SK-N-SH (cell line): ENCODE measurements at regions of chr12 and their contacts with region 1.

Region 1: DNA sequence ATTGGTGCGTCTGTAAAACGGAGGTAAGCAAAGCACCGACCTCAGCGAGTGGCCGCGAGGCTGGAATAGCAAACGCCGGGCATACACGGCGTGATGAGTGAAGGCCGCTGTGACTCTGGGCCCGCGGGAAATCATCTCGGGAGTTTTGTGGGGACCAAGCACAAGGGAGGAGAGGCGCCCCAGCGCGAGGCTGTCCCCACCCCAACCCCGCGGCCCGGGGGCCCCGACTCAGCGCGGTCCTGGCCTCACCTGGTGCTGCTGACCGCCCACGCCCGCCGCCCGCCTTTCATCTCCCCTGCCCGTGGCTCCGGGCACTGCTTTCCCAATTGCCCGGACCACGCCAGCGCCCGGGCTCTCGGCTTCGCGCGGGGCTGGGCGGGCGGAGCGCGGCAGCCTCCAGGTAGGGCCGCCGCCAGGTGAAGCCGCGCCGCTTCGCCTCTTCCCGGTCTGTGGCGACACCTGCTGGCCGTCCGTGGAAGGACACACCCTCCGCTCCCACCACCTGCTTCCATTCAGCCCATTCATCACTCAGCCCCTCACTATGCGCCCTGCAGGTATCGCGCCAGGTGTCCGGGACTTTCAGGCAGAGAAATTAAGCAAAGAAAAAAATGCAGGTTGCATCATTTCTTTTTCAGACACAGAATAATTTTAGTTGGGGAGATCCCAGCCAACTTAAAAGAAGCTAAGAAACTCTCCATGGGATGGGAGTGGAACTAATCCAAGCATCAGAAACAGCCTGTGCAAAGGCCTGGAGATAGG is 360.4 kb downstream of the MED13L start:
- DNase-seq: peak; percentile 86
- H3K4me3 ChIP-seq: peak overlapping the region; percentile 20 to 31; a peak in 2 of 4 replicates
- H3K27ac ChIP-seq: no peak overlapping the region
- H3K4me1 ChIP-seq: peaks cover 0 to 3% of the 10 kb centered on the region in 2 experiments; a peak in 1 of 4 replicates
- H3K27me3 ChIP-seq: no peaks in the 10 kb centered on the region; the same call in 1 of the 2 replicates
- CTCF ChIP-seq: peak; percentile 84
- EP300 ChIP-seq: no peak
- RAD21 ChIP-seq: peak; percentile 87

Region 2: DNA sequence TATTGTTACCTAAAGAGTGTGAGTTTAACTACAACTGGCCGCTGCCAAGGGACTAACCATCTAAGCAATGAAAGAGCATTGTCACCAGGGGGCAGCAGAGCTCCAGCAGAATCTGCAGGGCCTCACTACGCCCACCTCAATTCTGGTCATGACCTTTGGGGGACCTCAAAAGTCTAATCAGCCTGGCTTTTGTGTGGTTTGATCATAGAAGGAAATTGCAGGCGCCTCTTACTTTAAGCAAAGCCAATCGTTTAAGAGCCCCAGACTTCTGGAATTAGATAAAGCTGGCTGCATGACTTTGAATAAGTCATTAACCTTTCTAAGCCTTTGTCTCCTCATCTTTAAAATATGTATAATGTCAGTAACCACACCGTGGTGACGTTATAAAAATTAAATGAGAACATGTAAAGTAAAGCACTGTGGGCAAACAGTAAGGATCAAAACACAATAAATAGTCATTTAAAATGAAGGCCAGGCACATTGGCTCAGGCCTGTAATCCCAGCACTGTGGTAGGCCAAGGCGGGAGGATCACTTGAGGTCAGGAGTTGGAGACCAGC is 1291.7 kb before region 1 on chr12:
- CTCF ChIA-PET with region 1: interaction called, 56 read pairs
- POLR2A ChIA-PET with region 1: no interaction called
- DNase-seq: peak; percentile 68
- H3K4me3 ChIP-seq: no peak overlapping the region; a peak in 1 of 4 replicates
- H3K27ac ChIP-seq: no peak overlapping the region
- H3K4me1 ChIP-seq: no peaks in the 10 kb centered on the region
- H3K27me3 ChIP-seq: no peaks in the 10 kb centered on the region
- CTCF ChIP-seq: peak; percentile 86
- EP300 ChIP-seq: no peak
- RAD21 ChIP-seq: peak; percentile 86

Region 3: DNA sequence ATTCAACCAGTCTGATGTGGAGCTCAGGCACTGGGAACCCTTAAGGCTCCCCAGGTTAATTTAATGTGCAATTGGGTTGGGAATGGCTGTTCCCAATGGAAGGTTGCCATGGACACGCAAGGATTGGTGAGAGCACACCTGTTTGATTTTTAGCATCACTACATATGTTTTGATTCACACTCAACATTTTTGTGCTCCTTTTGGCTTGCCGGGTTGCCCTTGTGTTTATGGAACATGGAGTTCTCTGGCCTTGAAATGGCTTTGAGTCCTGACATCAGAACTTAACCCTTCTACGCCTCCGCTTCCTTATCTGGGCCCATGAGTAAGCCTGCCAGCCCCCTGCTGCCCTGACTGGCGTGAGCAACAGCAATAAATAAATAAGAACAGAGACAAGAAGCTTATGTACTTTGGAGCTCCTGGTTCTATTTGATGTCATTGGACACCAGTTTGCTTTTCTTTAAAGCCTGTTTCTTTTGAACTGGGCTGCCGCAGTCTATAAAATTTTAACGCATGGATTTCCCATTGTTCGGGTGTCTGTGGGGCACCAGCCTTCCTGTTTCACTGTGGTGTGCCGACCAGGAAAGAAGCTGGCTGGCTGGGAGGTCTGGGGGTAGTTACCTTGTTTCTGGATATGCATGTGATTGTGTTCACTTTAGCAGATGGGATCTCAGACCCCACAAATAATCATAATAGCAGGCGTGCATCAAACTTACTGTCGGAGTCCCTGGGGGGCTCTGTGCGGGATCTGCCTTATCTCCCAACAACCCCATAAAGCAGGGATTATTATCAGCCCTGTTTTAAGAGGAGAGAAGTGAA is 1260.9 kb before region 1 on chr12:
- CTCF ChIA-PET with region 1: interaction called, 27 read pairs
- POLR2A ChIA-PET with region 1: no interaction called
- DNase-seq: no peak
- H3K4me3 ChIP-seq: no peak overlapping the region
- H3K27ac ChIP-seq: no peak overlapping the region
- H3K4me1 ChIP-seq: no peaks in the 10 kb centered on the region
- H3K27me3 ChIP-seq: no peaks in the 10 kb centered on the region
- CTCF ChIP-seq: no peak
- EP300 ChIP-seq: no peak
- RAD21 ChIP-seq: no peak

Region 4: GRCh38 chr12:114668151-114668885 is 1248.8 kb before region 1 on chr12:
- CTCF ChIA-PET with region 1: interaction called, 45 read pairs
- POLR2A ChIA-PET with region 1: no interaction called
- DNase-seq: peak; percentile 92
- H3K4me3 ChIP-seq: peak overlapping the region; percentile 59 to 77
- H3K27ac ChIP-seq: peak overlapping the region in 1 of 2 experiments; percentile 89; a peak in 3 of 4 replicates
- H3K4me1 ChIP-seq: peaks cover 0 to 27% of the 10 kb centered on the region in 2 experiments; a peak in 2 of 4 replicates
- H3K27me3 ChIP-seq: no peaks in the 10 kb centered on the region
- CTCF ChIP-seq: peak; percentile 62
- EP300 ChIP-seq: no peak
- RAD21 ChIP-seq: peak; percentile 86

Region 5: GRCh38 chr12:115871714-115872113 is 45.4 kb before region 1 on chr12:
- CTCF ChIA-PET with region 1: interaction called, 10 read pairs
- POLR2A ChIA-PET with region 1: no interaction called
- DNase-seq: peak; percentile 53
- H3K4me3 ChIP-seq: no peak overlapping the region
- H3K27ac ChIP-seq: no peak overlapping the region
- H3K4me1 ChIP-seq: peaks cover 0 to 11% of the 10 kb centered on the region in 2 experiments; a peak in 1 of 4 replicates
- H3K27me3 ChIP-seq: no peaks in the 10 kb centered on the region
- CTCF ChIP-seq: peak; percentile 64
- EP300 ChIP-seq: no peak
- RAD21 ChIP-seq: peak; percentile 28